Caco-2 (cell line): ENCODE measurements at regions of chr6 and their contacts with region 1.

Region 1: GRCh38 chr6:46090115-46091079 is 39.4 kb upstream of the ENPP4 start:
- DNase-seq: peak; percentile 46 to 60
- H3K4me3 ChIP-seq: no peak overlapping the region
- H3K4me3 Mint-ChIP-seq: no peak overlapping the region
- H3K27ac Mint-ChIP-seq: no peak overlapping the region
- H3K4me1 ChIP-seq: no peaks in the 10 kb centered on the region
- H3K4me1 Mint-ChIP-seq: no peaks in the 10 kb centered on the region
- H3K27me3 ChIP-seq: no peaks in the 10 kb centered on the region
- H3K27me3 Mint-ChIP-seq: peaks cover 4% of the 10 kb centered on the region
- CTCF ChIP-seq: peak; percentile 74 to 76

Region 2: DNA sequence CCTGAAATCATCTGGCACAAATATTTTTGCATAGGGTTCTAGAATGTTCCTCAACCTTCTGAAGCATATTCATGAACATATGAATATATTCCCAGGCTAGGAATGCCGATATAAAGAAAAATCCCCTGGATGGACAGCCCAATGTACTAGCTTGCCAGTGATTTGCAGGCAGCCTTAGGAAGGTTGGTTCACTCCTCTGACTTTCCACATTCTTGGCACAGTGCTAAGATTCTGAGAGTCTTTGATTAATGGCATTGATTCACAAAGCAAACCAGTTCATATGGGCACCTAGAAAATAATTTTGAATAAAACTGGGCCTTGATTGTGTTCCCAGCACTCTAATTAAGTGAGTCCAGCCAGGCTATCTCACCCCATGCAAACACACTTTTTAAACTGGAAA is 17.5 kb before region 1 on chr6:
- CTCF ChIA-PET with region 1: no interaction called
- POLR2A ChIA-PET with region 1: no interaction called
- intact Hi-C with region 1: no loop called
- DNase-seq: no peak
- H3K4me3 ChIP-seq: no peak overlapping the region
- H3K4me3 Mint-ChIP-seq: no peak overlapping the region
- H3K27ac Mint-ChIP-seq: no peak overlapping the region
- H3K4me1 ChIP-seq: no peaks in the 10 kb centered on the region
- H3K4me1 Mint-ChIP-seq: no peaks in the 10 kb centered on the region
- H3K27me3 ChIP-seq: no peaks in the 10 kb centered on the region
- H3K27me3 Mint-ChIP-seq: peaks cover 13% of the 10 kb centered on the region
- CTCF ChIP-seq: no peak

Region 3: DNA sequence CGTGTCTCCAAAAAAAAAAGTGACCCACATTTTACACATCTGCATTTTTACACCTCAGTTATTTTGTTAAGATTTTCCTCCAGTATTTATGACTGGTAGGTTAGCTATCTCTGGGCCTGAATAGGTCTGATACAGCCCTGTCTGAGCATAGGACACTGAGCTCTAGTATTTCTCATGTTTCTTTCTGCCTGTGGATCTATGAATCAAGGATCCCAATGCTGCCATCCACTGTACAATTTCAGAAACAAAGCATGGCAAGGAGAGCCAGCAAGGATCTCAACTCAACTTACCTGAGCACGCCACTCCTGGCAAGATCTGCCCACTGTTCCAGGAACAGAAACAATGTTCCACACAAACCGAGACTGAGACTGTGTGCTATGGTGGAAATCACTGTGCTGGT is 116.8 kb after region 1 on chr6:
- CTCF ChIA-PET with region 1: interaction called, 4 read pairs
- POLR2A ChIA-PET with region 1: no interaction called
- intact Hi-C with region 1: loop called (anchors 2 kb)
- DNase-seq: no peak
- H3K4me3 ChIP-seq: no peak overlapping the region
- H3K4me3 Mint-ChIP-seq: no peak overlapping the region
- H3K27ac Mint-ChIP-seq: no peak overlapping the region
- H3K4me1 ChIP-seq: no peaks in the 10 kb centered on the region
- H3K4me1 Mint-ChIP-seq: peaks cover 5% of the 10 kb centered on the region
- H3K27me3 ChIP-seq: no peaks in the 10 kb centered on the region
- H3K27me3 Mint-ChIP-seq: peaks cover 3% of the 10 kb centered on the region
- CTCF ChIP-seq: no peak

Region 4: GRCh38 chr6:46410334-46410953 is 320.0 kb after region 1 on chr6:
- CTCF ChIA-PET with region 1: interaction called, 7 read pairs
- POLR2A ChIA-PET with region 1: no interaction called
- intact Hi-C with region 1: loop called (anchors 1 kb)
- DNase-seq: peak in 1 of 2 experiments; percentile 8
- H3K4me3 ChIP-seq: no peak overlapping the region
- H3K4me3 Mint-ChIP-seq: no peak overlapping the region
- H3K27ac Mint-ChIP-seq: no peak overlapping the region
- H3K4me1 ChIP-seq: no peaks in the 10 kb centered on the region
- H3K4me1 Mint-ChIP-seq: peaks cover 4% of the 10 kb centered on the region
- H3K27me3 ChIP-seq: no peaks in the 10 kb centered on the region
- H3K27me3 Mint-ChIP-seq: peaks cover 3% of the 10 kb centered on the region
- CTCF ChIP-seq: peak; percentile 31 to 63

Region 5: GRCh38 chr6:46626228-46626909 is 536.0 kb after region 1 on chr6:
- CTCF ChIA-PET with region 1: no interaction called
- POLR2A ChIA-PET with region 1: no interaction called
- intact Hi-C with region 1: loop called (anchors 1 kb)
- DNase-seq: peak in 1 of 2 experiments; percentile 16
- H3K4me3 ChIP-seq: no peak overlapping the region
- H3K4me3 Mint-ChIP-seq: no peak overlapping the region
- H3K27ac Mint-ChIP-seq: no peak overlapping the region
- H3K4me1 ChIP-seq: no peaks in the 10 kb centered on the region
- H3K4me1 Mint-ChIP-seq: no peaks in the 10 kb centered on the region
- H3K27me3 ChIP-seq: no peaks in the 10 kb centered on the region
- H3K27me3 Mint-ChIP-seq: peaks cover 8% of the 10 kb centered on the region
- CTCF ChIP-seq: peak; percentile 35 to 64